ENCODE measurements at regions of chr5 and their contacts with region 1.

Region 1: GRCh38 chr5:38994324-38994927 is 79.8 kb downstream of the RICTOR start:
- DNase-seq: no peak
- H3K4me3 Mint-ChIP-seq: no peak overlapping the region
- H3K27ac Mint-ChIP-seq: no peak overlapping the region
- H3K4me1 Mint-ChIP-seq: peaks cover 6% of the 10 kb centered on the region
- H3K27me3 Mint-ChIP-seq: no peaks in the 10 kb centered on the region

Region 2: GRCh38 chr5:38680094-38680825 is 314.2 kb before region 1 on chr5:
- intact Hi-C with region 1: no loop called
- DNase-seq: no peak
- H3K4me3 Mint-ChIP-seq: no peak overlapping the region
- H3K27ac Mint-ChIP-seq: no peak overlapping the region
- H3K4me1 Mint-ChIP-seq: no peaks in the 10 kb centered on the region
- H3K27me3 Mint-ChIP-seq: no peaks in the 10 kb centered on the region

Region 3: GRCh38 chr5:38780950-38781349 is 213.5 kb before region 1 on chr5:
- intact Hi-C with region 1: no loop called
- DNase-seq: no peak
- H3K4me3 Mint-ChIP-seq: no peak overlapping the region
- H3K27ac Mint-ChIP-seq: no peak overlapping the region
- H3K4me1 Mint-ChIP-seq: no peaks in the 10 kb centered on the region
- H3K27me3 Mint-ChIP-seq: peaks cover 7% of the 10 kb centered on the region

Region 4: DNA sequence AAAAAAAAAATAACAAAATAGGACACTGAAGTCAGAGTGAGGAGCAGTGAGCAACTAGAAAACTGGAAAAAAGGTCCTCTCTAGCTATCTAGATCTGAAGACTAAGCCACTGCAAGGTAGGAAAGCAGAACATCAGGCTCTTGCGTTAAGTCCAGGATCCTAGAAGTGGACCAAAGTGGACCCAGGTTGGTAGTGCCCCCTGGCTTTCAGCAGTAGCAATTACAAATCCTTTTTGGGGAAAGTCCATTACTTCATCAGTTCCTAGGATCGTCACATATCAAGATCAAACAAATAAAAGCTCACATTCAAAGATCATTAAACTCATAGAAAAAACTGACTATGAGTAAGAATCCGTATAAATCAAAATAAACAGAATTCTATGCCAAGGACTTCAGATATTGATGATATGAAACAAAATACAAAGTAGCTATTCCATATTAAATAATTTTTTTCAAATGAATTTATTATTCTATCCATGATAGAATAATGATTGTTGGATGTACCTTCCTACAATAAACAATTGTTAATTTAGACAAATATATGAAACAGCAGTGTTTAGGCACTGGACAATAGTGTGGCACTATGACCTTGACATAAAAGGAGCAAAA is 86.3 kb after region 1 on chr5:
- intact Hi-C with region 1: loop called (anchors 1 kb)
- DNase-seq: no peak
- H3K4me3 Mint-ChIP-seq: no peak overlapping the region
- H3K27ac Mint-ChIP-seq: no peak overlapping the region
- H3K4me1 Mint-ChIP-seq: peaks cover 30% of the 10 kb centered on the region
- H3K27me3 Mint-ChIP-seq: peaks cover 20% of the 10 kb centered on the region

Region 5: DNA sequence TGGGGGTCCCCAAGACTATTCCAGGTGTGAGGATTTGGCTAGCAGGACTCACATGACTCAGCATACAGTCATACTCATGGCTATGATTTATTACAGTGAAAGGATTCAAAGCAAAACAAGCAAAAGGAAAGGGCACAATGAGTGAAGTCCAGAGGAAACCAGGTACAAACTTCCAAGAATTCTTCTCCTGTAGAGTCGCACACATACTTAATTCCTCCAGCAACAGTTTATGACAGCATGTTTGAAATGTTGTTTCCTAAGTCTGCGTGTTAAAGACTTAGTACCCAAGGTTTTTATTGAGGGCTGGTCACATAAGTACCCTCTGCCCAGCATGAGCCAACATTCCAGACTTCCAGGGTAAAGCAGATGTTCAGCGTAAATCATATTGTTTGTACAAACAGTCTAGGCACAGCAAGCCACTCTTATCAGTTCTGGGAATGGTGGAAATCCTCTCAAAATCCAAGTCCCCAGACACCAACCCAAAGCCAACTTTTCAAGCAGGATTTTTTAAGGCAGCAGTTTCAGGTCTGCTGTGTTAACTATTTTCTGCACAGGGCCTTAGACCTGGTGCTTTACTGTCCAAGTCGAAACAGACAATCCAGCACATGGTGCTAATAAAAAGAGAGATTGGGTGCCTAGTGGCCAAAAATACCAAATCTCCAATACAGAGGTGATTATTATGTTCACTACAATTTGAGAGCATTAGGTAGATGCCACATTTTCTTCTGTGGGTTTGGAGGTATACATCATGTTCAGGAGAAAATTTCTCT is 98.3 kb after region 1 on chr5:
- intact Hi-C with region 1: no loop called
- DNase-seq: no peak
- H3K4me3 Mint-ChIP-seq: no peak overlapping the region
- H3K27ac Mint-ChIP-seq: no peak overlapping the region
- H3K4me1 Mint-ChIP-seq: peaks cover 10% of the 10 kb centered on the region
- H3K27me3 Mint-ChIP-seq: peaks cover 27% of the 10 kb centered on the region

Region 6: DNA sequence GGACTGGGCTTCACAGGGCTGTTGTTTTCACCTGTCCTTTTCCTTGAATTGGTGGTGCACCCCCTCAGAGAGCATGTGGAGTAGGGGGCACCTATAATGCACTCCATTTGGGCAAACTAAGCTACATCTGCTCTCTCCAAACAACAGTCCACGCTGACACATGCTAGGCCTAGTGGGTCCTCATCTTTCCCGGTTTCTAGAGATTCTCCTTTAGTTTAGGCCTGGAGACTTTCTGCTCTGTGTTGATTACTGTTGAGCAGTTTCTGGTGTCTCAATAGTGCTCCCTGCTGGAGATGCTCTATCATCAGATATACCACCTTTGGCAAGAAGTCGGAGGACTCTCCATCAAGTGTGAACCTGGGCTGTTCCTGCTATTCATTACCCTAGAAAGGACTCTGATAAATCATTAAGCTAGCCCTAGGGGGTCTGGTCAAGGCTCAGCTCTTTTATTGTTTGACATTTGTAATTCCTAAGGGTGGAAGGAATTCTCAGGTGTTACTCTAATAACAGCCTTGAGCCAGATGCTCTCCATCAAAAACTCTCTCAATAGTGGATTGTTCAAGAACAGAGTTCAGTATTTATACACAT is 288.9 kb after region 1 on chr5:
- intact Hi-C with region 1: loop called (anchors 1 kb)
- DNase-seq: peak; percentile 54
- H3K4me3 Mint-ChIP-seq: no peak overlapping the region
- H3K27ac Mint-ChIP-seq: no peak overlapping the region
- H3K4me1 Mint-ChIP-seq: peaks cover 22% of the 10 kb centered on the region
- H3K27me3 Mint-ChIP-seq: peaks cover 12% of the 10 kb centered on the region

Region 7: DNA sequence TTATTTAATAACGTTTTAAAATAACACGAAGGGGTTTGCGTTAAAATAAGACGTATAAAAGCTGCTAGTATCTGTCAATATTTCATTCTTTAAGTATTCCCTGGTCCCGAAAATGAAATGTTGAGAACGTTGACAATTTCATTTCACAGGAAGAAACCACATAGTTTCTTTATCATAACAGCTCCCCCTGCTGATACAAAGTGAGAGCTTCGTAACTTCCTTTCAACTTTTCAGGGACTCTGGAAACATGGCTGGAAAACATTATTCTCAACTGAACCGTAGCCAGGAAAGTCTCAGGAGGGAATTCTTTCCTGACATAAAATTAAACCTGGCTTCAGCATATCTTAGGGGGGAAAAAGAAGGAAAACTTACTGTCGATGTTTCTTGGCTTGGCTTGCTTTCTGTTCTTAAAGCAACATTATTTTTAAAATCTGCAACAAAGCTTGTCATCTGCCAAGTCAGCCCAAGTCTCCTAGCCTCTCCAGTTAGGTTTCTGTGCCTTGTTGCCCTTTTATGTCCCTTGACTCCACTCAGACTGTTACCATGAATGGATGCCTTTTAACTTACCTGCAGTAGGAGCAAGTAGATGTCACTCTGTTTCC is 553.2 kb after region 1 on chr5:
- intact Hi-C with region 1: loop called (anchors 10 kb)
- DNase-seq: no peak
- H3K4me3 Mint-ChIP-seq: no peak overlapping the region
- H3K27ac Mint-ChIP-seq: no peak overlapping the region
- H3K4me1 Mint-ChIP-seq: peaks cover 7% of the 10 kb centered on the region
- H3K27me3 Mint-ChIP-seq: peaks cover 6% of the 10 kb centered on the region

Measured in activated T-helper 1 cell treated with anti-CD3 and anti-CD28 coated beads, Interleukin-12 subunit alpha, Interleukin-12 subunit beta, Interleukin-2, Interleukin-4 antibody, amounts not matched to agents 30 ng/mL and 10 ng/mL and 1 ng/mL, durations not matched to agents 14 hours and 24 hours and 36 hours (primary cell).